Uterus (tissue), 4 donors: ENCODE measurements at regions of chr12 and their contacts with region 1.

Region 1: DNA sequence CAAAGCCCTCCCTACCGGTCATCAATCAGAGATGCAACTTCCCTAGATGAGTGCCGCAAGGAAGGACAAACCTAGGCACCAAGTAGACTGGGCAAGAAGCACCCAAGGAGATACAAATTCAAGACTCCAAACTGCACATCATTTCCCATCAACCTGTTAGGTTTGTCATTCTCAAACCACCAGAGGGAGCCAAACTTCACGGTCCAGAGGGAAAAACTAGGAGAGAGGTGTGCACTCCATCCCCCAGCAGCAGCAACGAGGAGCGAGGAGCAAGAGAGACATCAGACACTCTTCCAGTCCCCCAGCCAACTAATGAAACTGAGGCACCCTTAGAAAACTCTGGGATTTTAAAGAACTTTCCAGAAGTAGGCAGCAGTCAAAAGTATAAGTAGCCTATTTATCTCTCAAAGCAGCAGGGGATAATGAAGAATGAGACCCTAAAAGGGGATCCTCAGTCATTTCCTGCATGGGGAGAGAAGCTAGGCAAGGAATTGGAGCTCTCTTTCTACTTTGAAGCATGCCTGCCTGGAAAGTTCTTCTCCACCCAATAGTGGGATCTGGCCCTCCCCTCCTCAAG is 37.0 kb upstream of the NT5DC3 start:
- DNase-seq: peak in 1 of 2 donors; percentile 65
- H3K4me3 ChIP-seq: no peak overlapping the region
- H3K27ac ChIP-seq: no peak overlapping the region
- H3K4me1 ChIP-seq: no peaks in the 10 kb centered on the region
- H3K27me3 ChIP-seq: no peaks in the 10 kb centered on the region
- CTCF ChIP-seq: peak; percentile 54 to 75 (median 62)
- POLR2A ChIP-seq: no peak

Region 2: GRCh38 chr12:103771466-103771865 is 106.6 kb before region 1 on chr12:
- intact Hi-C with region 1: loop called (anchors 10 kb)
- DNase-seq: peak; percentile 52 to 56
- H3K4me3 ChIP-seq: no peak overlapping the region
- H3K27ac ChIP-seq: peak overlapping the region in 1 of 2 donors; percentile 4
- H3K4me1 ChIP-seq: peaks cover 0 to 4% of the 10 kb centered on the region in 2 donors
- H3K27me3 ChIP-seq: no peaks in the 10 kb centered on the region
- CTCF ChIP-seq: peak in 3 of 4 experiments; percentile 48 to 69 (median 61)
- POLR2A ChIP-seq: no peak

Region 3: DNA sequence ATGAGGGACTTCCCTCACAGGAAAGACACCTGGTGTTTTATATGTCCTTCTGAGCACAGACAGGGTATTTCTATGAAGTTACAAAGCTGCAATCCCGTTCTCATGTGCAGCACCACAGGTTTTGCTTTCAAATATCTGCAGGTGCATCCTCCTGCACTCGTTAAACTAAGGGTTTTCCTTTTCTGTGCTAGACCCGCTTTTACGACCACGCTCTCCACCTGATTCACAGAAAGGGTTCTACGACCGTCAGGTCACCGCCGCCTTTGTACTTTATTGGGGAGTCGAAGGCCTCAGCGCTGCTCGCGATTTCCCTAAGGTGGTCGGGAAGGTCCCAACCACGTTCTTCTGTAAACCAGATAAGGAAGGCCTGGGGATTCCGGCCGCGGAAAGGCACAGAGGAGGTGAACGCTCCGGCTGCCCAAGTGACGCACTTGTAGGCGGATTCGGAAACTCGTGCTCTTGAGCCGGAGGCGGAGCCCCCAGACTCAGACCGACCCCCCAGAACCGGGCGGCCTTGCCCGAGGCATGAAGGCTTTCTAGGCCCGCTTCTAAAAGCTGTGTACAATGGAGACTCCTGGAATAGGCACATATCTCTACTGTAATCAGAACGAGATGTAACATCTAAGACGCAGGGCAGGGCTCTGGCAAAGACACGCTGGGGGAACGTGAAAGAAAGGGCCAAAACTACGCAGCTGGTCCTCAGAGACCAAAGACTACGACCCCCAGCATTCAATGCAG is 51.2 kb after region 1 on chr12:
- intact Hi-C with region 1: loop called (anchors 10 kb)
- DNase-seq: peak; percentile 84 to 94
- H3K4me3 ChIP-seq: peak overlapping the region; percentile 61 to 98
- H3K27ac ChIP-seq: peak overlapping the region; percentile 95 to 97
- H3K4me1 ChIP-seq: peaks cover 4 to 12% of the 10 kb centered on the region in 2 donors
- H3K27me3 ChIP-seq: no peaks in the 10 kb centered on the region
- CTCF ChIP-seq: no peak
- POLR2A ChIP-seq: peak; percentile 25 to 70